Activated CD8-positive, alpha-beta T cell treated with anti-CD3 and anti-CD28 coated beads for 36 hours (primary cell): ENCODE measurements at regions of chr4 and their contacts with region 1.

Region 1: DNA sequence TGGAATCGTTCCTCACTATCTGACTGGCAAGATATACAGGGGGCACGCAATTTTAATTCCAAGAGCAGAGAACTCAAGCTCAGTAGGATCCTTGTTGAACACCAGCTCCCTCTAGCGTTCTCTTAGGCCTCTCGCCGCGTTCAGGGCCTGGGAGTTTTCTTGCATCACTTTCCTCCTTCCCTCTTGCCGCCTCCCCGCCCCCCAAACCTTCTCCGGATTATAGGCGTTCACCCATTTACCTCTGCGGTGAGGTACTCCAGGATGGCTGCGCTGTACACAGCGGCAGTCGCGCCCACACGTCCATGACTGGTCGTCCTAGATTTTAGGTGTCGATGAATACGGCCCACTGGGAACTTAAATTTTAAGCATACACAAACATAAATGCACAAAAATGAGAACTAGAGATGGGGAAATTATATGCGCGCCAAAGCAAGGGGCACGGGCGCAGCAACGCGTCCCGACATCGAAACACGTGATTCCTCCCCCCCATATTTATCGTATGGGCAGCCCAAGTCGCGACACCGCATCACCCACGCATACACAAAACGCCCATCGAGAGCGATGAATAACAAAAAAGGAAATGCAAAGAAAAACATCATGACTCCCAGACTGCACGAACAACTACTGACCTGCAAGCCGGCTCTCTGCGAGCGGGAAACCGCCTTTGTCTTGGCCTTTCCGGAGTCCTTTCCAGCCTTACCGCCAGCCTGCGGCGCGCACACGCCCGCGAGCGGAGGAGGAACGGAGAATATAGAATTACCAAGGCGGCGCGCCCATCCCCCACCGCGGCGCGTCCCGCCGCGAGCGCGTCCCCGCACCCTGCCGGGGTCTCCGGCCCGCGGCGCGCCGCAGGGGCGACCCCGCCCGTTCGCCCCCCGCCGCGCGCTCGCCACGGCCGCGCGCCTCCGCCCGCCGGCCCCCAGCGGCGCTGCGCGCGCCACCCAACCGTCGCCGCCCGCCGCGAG is 759 bp downstream of the H2AZ1 start:
- DNase-seq: peak; percentile 97
- ATAC-seq: peak; percentile 40
- H3K4me3 Mint-ChIP-seq: no peak overlapping the region
- H3K27ac Mint-ChIP-seq: no peak overlapping the region
- H3K4me1 Mint-ChIP-seq: peaks cover 37% of the 10 kb centered on the region
- H3K27me3 Mint-ChIP-seq: no peaks in the 10 kb centered on the region
- CTCF ChIP-seq: peak; percentile 79

Region 2: DNA sequence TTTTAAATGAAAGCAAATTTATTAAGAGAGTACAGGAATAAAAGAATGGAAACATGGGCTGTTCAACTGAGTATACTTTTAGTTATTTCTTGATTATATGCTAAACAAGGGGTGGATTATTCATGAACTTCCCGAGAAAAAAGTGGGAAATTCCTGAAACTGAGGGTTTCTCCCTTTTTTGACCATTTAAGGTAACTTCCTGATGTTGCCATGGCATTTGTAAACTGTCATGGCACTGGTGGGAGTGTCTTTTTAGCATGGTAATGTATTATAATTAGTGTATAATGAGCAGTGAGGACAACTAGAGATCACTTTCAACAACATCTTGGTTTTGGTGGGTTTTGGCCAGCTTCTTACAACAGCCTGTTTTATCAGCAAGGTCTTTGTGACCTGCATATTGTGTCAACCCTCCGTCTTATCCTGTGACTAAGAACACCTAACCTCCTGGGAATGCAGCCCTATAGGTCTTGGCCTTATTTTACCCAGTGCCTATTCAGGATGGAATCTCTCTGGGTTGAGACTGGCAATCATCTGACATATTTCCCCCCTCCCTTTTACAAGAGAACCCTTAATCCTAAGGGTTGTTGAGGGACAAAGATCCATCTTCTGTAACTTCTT is 783.5 kb before region 1 on chr4:
- CTCF ChIA-PET with region 1: no interaction called
- POLR2A ChIA-PET with region 1: no interaction called
- intact Hi-C with region 1: no loop called
- DNase-seq: no peak
- ATAC-seq: no peak
- H3K4me3 Mint-ChIP-seq: no peak overlapping the region
- H3K27ac Mint-ChIP-seq: no peak overlapping the region
- H3K4me1 Mint-ChIP-seq: no peaks in the 10 kb centered on the region
- H3K27me3 Mint-ChIP-seq: no peaks in the 10 kb centered on the region
- CTCF ChIP-seq: no peak

Region 3: GRCh38 chr4:99563310-99564186 is 385.8 kb before region 1 on chr4 and contains the start of gene TRMT10A:
- CTCF ChIA-PET with region 1: no interaction called
- POLR2A ChIA-PET with region 1: no interaction called
- intact Hi-C with region 1: loop called (anchors 5 kb)
- DNase-seq: peak; percentile 98
- ATAC-seq: peak; percentile 89
- H3K4me3 Mint-ChIP-seq: peak within 1 kb of the TSS; percentile 90
- H3K27ac Mint-ChIP-seq: peak within 1 kb of the TSS; percentile 98
- H3K4me1 Mint-ChIP-seq: peaks cover 8% of the 10 kb centered on the region
- H3K27me3 Mint-ChIP-seq: peaks cover 12% of the 10 kb centered on the region
- CTCF ChIP-seq: no peak
- total RNA-seq, gene TRMT10A: 7.7 to 8.0 TPM

Region 4: GRCh38 chr4:99816545-99817308 is 132.6 kb before region 1 on chr4 and contains the start of gene DAPP1:
- CTCF ChIA-PET with region 1: interaction called, 16 read pairs
- POLR2A ChIA-PET with region 1: interaction called, 7 read pairs
- intact Hi-C with region 1: loop called (anchors 2 kb)
- DNase-seq: peak; percentile 91
- ATAC-seq: peak; percentile 96
- H3K4me3 Mint-ChIP-seq: peak within 1 kb of the TSS; percentile 75
- H3K27ac Mint-ChIP-seq: peak within 1 kb of the TSS; percentile 86
- H3K4me1 Mint-ChIP-seq: peaks cover 63% of the 10 kb centered on the region
- H3K27me3 Mint-ChIP-seq: no peaks in the 10 kb centered on the region
- CTCF ChIP-seq: no peak
- total RNA-seq, gene DAPP1: 11.7 to 12.3 TPM

Region 5: DNA sequence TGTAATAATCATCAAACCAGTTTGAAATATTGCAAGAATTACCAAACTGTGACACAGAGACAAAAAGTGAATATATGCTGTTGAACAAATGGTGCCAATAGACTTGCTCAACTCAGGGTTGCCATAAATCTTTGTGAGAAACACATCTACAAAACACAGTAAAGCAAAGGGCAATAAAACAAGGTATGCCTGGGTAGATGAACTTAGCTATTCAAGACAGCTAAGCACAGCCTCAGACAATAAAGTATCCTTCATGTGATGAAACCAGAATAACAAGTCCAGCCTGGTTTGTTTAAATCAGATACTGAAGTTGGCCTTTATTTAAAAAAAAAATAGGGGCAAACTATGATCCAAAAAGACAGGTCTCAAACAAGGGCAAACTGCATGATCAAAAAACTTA is 74.2 kb before region 1 on chr4:
- CTCF ChIA-PET with region 1: no interaction called
- POLR2A ChIA-PET with region 1: no interaction called
- intact Hi-C with region 1: no loop called
- DNase-seq: no peak
- ATAC-seq: no peak
- H3K4me3 Mint-ChIP-seq: no peak overlapping the region
- H3K27ac Mint-ChIP-seq: no peak overlapping the region
- H3K4me1 Mint-ChIP-seq: no peaks in the 10 kb centered on the region
- H3K27me3 Mint-ChIP-seq: no peaks in the 10 kb centered on the region
- CTCF ChIP-seq: no peak

Region 6: DNA sequence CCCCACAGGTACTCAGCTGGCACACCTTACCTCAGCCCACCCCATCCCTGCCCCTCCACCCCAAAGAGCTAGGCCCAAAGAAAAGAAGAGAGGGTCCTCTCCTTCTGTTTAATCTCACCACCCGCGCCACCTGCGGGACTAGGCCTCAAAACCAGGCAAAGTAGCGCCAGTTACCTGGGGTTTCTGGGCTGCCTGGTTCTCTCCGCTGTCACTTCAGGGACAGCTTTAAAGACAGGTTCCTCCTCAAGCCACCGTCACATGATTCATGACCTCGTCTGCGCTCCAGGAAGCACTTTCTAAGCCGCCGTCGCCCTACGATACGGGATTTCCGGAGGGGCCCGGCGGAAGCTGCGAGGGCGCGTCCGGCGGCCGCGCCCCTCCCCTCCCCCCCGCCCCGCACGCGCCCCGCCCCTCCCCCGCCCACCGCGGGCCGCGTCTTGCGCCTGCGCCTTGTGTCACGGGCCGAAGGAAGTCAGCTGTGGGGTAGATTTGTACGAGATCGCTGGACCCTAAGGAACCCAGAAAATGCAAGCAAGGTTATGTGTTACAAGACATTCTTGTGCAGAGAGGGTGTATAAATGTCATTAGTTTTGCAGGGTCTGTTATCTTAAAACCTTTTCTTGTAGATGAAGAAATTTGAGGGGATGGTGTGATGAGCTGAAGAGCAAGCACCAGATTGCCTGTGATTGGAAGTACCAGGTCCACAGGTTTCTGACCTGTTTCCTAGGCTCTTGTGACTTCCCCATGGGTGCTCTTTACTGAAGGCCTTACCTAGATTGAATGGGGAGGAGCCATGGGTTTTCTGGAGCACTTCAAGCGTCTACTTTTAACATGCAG is 54.9 kb before region 1 on chr4 and contains the start of gene LAMTOR3:
- CTCF ChIA-PET with region 1: interaction called, 8 read pairs
- POLR2A ChIA-PET with region 1: interaction called, 11 read pairs
- intact Hi-C with region 1: loop called (anchors 5 kb)
- DNase-seq: peak; percentile 92
- ATAC-seq: peak; percentile 98
- H3K4me3 Mint-ChIP-seq: peak within 1 kb of the TSS; percentile 95
- H3K27ac Mint-ChIP-seq: peak within 1 kb of the TSS; percentile 93
- H3K4me1 Mint-ChIP-seq: peaks cover 34% of the 10 kb centered on the region
- H3K27me3 Mint-ChIP-seq: no peaks in the 10 kb centered on the region
- CTCF ChIP-seq: no peak
- total RNA-seq, gene LAMTOR3: 23.2 to 23.5 TPM

Region 7: GRCh38 chr4:100130491-100130890 is 181.2 kb after region 1 on chr4:
- CTCF ChIA-PET with region 1: no interaction called
- POLR2A ChIA-PET with region 1: no interaction called
- intact Hi-C with region 1: no loop called
- DNase-seq: no peak
- ATAC-seq: no peak
- H3K4me3 Mint-ChIP-seq: no peak overlapping the region
- H3K27ac Mint-ChIP-seq: no peak overlapping the region
- H3K4me1 Mint-ChIP-seq: no peaks in the 10 kb centered on the region
- H3K27me3 Mint-ChIP-seq: peaks cover 4% of the 10 kb centered on the region
- CTCF ChIP-seq: no peak

Region 8: DNA sequence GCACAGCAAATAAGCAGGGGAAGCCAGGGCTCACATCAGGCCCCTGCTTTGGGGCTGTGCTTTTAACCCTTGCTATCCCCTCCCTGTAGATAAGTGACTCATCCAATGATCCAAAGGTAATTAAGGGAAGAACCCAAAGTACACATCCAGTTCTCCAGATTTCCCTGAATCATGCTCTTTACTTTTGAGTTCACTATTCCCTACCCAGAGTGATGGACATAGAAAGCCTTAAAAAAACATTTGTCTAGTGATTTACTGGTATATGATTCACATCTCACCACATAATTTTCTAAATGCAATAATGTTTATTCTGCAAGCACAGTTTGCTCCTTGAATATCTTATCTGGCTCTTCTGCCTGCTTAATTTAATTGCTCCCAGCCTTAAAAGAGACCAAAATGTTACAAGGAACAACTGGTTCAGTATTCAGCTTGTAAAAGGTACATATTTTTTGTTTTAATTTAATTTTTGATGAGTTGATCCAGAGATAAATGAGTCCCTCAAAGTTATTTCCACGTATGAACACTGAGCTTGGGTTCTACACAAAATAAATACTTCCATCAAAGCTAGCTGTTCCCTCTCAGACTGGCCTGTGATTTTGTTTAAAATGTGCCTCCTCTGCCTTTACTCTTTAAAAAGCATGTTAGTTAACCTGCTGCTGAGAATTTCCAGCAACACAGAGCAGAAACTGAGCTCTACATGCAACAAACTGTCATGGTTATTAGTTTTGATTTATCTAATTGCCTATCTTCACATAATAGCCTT is 1262.0 kb after region 1 on chr4:
- CTCF ChIA-PET with region 1: no interaction called
- POLR2A ChIA-PET with region 1: no interaction called
- intact Hi-C with region 1: no loop called
- DNase-seq: no peak
- ATAC-seq: no peak
- H3K4me3 Mint-ChIP-seq: no peak overlapping the region
- H3K27ac Mint-ChIP-seq: no peak overlapping the region
- H3K4me1 Mint-ChIP-seq: peaks cover 12% of the 10 kb centered on the region
- H3K27me3 Mint-ChIP-seq: no peaks in the 10 kb centered on the region
- CTCF ChIP-seq: no peak